ENCODE measurements at regions of chr3 and their contacts with region 1.

Region 1: DNA sequence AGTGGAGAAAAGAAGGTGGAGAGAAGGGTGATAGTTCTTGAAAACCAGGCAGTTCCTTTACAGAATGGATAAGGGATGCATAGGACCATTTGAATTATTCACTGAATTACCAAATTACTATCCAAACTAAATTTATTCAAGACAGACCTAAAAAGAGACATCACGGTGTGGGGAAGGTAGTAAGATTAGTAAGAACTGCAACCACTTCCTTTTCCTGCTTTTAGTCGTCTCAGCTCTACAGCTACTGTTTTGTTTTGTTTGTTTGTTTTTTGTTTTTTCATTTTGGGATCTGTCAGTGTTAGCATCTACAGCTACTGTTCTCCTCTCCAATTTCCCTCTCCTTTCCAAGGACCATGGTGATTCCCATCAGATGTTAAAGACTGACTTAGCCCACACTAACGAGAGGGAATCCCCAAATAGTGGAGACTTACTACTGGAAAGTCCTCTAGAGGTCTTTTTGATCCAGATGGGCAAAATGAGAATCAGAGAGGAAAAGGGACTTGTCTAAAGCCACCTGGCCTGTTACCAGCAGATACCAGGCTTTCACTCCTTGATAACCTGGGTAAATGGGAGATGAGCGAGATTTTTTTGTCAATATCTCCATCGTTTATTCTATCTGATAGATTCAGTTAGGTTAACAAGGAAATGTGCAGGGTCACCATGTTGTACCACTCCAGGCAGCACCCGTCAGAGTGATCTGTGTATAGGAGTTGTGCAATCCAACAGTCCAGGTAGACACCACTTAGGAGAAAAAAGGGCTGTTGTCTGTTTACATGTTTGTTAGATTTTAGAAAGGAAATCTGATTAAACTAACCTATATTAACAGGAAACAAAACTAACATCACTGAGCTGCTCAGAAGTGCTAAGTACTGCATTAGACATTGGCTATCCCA is 6.0 kb downstream of the HCLS1 start:
- DNase-seq: peak in 2 of 9 experiments; percentile 20 to 51
- ATAC-seq: peak; percentile 81
- H3K4me3 ChIP-seq: peak overlapping the region in 1 of 2 experiments; percentile 7
- H3K4me3 Mint-ChIP-seq: peak overlapping the region; percentile 61
- H3K27ac ChIP-seq: peak overlapping the region; percentile 8 to 70
- H3K27ac Mint-ChIP-seq: peak overlapping the region; percentile 91
- H3K4me1 ChIP-seq: peaks cover 76% of the 10 kb centered on the region
- H3K4me1 Mint-ChIP-seq: peaks cover 86% of the 10 kb centered on the region
- H3K27me3 ChIP-seq: no peaks in the 10 kb centered on the region
- H3K27me3 Mint-ChIP-seq: no peaks in the 10 kb centered on the region
- CTCF ChIP-seq: no peak

Region 2: DNA sequence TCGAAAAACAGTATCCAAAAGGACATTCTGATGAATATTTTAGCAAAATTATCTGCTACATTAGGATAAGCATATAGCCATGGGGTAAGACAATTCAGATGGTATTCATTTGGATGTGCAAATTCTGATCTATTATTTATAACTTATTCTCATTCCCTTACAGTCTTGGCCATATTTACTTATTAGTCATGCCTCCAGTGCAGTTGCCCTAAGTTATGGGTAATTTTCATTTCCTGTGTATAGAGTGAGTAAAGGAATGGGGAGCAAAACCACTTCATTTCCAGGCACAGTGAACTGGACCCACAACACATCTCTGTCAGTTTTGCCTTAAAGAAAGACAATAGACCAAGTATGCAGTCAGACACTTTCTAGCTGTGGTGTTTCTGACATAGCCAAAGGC is 243.2 kb before region 1 on chr3:
- CTCF ChIA-PET with region 1: no interaction called
- POLR2A ChIA-PET with region 1: no interaction called
- intact Hi-C with region 1: no loop called
- DNase-seq: no peak
- ATAC-seq: no peak
- H3K4me3 ChIP-seq: no peak overlapping the region
- H3K4me3 Mint-ChIP-seq: no peak overlapping the region
- H3K27ac ChIP-seq: no peak overlapping the region
- H3K27ac Mint-ChIP-seq: no peak overlapping the region
- H3K4me1 ChIP-seq: no peaks in the 10 kb centered on the region
- H3K4me1 Mint-ChIP-seq: no peaks in the 10 kb centered on the region
- H3K27me3 ChIP-seq: no peaks in the 10 kb centered on the region
- H3K27me3 Mint-ChIP-seq: peaks cover 4% of the 10 kb centered on the region
- CTCF ChIP-seq: no peak

Region 3: DNA sequence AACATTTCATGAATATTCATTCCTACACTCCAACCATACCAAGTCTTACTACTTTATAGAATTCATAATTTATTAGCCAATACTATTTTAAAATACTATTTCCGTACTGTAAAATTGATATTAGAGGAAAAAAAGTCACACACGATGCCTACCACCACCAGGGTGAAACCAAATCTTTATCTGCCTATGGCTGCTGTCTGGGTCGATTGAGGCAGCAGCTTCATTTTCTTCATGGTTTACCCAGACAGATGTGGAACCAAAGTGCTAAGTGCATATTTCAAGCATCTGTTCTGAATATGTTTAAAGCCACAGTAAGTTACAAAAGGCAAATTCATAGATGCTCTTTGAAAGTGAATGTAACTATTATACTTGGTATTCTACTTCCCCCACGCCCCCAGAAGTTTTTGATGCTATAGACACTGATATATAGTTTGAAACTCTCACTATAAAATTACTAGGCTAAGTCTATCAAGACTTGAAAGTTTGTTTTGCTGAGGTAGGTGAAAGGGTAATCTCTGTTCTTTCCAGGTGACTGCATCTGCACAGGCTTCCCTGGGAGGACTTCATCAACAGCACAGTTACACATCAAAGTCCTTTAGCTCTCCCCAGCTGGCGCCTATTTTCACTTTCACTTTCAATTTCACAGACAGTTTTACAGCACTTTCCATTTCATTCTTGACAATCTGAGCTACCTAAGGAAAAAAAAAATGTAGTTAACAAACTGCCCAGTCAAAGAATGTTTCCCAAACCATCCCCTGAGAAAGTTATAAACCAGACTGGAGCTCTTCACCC is 222.8 kb before region 1 on chr3:
- CTCF ChIA-PET with region 1: no interaction called
- POLR2A ChIA-PET with region 1: interaction called, 6 read pairs
- intact Hi-C with region 1: loop called in 1 of 2 experiments (anchors 10 kb)
- DNase-seq: peak in 8 of 9 experiments; percentile 18 to 82 (median 48)
- ATAC-seq: peak; percentile 95
- H3K4me3 ChIP-seq: peak overlapping the region; percentile 26 to 39
- H3K4me3 Mint-ChIP-seq: peak overlapping the region; percentile 81
- H3K27ac ChIP-seq: peak overlapping the region; percentile 2 to 28
- H3K27ac Mint-ChIP-seq: peak overlapping the region; percentile 80
- H3K4me1 ChIP-seq: peaks cover 3% of the 10 kb centered on the region
- H3K4me1 Mint-ChIP-seq: peaks cover 14% of the 10 kb centered on the region
- H3K27me3 ChIP-seq: no peaks in the 10 kb centered on the region
- H3K27me3 Mint-ChIP-seq: no peaks in the 10 kb centered on the region
- CTCF ChIP-seq: no peak